Activated CD4-positive, alpha-beta T cell treated with anti-CD3 and anti-CD28 coated beads, Interleukin-2, amount 10 ng/mL, durations not matched to agents 24 days and 14 days (primary cell): ENCODE measurements at regions of chr13 and their contacts with region 1.

Region 1: GRCh38 chr13:38349390-38350113 is at the start of gene UFM1:
- DNase-seq: peak; percentile 95
- H3K4me3 Mint-ChIP-seq: peak within 1 kb of the TSS; percentile 99
- H3K27ac Mint-ChIP-seq: peak within 1 kb of the TSS; percentile 99
- H3K4me1 Mint-ChIP-seq: peaks cover 34% of the 10 kb centered on the region
- H3K27me3 Mint-ChIP-seq: no peaks in the 10 kb centered on the region
- total RNA-seq, gene UFM1: 63.5 and 69.4 TPM in 2 replicates

Region 2: GRCh38 chr13:36431654-36432511 is 1917.7 kb before region 1 on chr13 and contains the start of gene CCNA1:
- intact Hi-C with region 1: loop called (anchors 10 kb)
- DNase-seq: peak; percentile 79
- H3K4me3 Mint-ChIP-seq: peak within 1 kb of the TSS; percentile 77
- H3K27ac Mint-ChIP-seq: no peak within 1 kb of the TSS
- H3K4me1 Mint-ChIP-seq: peaks cover 16% of the 10 kb centered on the region
- H3K27me3 Mint-ChIP-seq: peaks cover 47% of the 10 kb centered on the region
- total RNA-seq, gene CCNA1: 2.1 and 2.2 TPM in 2 replicates

Region 3: DNA sequence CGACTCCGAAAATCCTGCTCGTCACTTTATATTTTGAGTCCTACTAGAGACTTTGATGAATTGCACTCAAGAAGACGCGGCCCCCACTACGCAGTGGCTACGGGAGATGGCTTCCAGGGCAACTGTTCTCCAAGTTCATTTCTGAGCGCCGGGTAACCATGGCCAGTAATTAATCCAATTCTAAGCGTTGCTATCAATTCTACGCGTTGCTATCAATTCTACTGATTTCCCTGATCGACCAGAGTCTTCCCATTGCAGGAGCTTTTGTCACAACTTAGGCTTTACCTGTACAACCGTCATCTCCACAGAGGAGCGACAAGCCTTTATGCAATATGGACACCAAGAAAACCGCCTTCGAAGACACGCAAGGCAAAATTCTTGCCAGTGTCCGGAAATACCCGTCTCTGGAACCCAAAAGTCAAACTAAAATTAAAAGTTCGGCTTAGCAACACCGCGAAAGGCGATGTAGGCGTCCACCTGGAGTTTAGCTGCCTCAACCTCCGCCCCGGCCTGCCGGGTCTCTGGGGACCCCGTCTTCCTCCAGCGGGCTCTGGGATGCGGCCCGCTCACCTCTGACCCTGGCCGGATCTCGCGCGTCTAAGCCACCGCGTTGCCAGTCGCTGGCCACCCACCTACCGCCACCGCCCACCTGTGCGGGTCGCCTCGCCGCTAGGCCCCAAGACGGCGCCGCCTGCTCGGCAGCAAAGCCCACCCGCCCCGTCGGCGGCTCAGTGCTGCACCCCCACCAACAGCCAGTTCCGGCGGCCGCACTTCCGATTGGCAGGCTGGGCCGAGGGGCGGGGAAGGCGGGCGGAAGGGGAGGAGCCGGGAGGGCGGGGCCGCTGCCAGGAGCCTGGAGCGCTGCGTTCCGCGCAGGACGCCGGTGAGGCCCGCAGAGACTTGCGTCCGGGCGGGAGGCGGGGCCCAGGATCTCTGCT is 1290.4 kb before region 1 on chr13 and contains the start of gene SUPT20H:
- intact Hi-C with region 1: loop called (anchors 2 kb)
- DNase-seq: peak; percentile 97
- H3K4me3 Mint-ChIP-seq: peak within 1 kb of the TSS; percentile 87
- H3K27ac Mint-ChIP-seq: peak within 1 kb of the TSS; percentile 97
- H3K4me1 Mint-ChIP-seq: peaks cover 20% of the 10 kb centered on the region
- H3K27me3 Mint-ChIP-seq: peaks cover 9% of the 10 kb centered on the region
- total RNA-seq, gene SUPT20H: 67.4 and 74.8 TPM in 2 replicates

Region 4: GRCh38 chr13:37914781-37915391 is 434.7 kb before region 1 on chr13:
- intact Hi-C with region 1: no loop called
- DNase-seq: no peak
- H3K4me3 Mint-ChIP-seq: no peak overlapping the region
- H3K27ac Mint-ChIP-seq: no peak overlapping the region
- H3K4me1 Mint-ChIP-seq: no peaks in the 10 kb centered on the region
- H3K27me3 Mint-ChIP-seq: no peaks in the 10 kb centered on the region

Region 5: GRCh38 chr13:39602614-39603366 is 1253.2 kb after region 1 on chr13 and contains the start of gene LHFPL6:
- intact Hi-C with region 1: loop called (anchors 5 kb)
- DNase-seq: peak; percentile 91
- H3K4me3 Mint-ChIP-seq: peak within 1 kb of the TSS; percentile 86
- H3K27ac Mint-ChIP-seq: peak within 1 kb of the TSS; percentile 49
- H3K4me1 Mint-ChIP-seq: peaks cover 14% of the 10 kb centered on the region
- H3K27me3 Mint-ChIP-seq: peaks cover 65% of the 10 kb centered on the region
- total RNA-seq, gene LHFPL6: 4.8 TPM in 2 replicates